ENCODE measurements at regions of chrX and their contacts with region 1.

Region 1: GRCh38 chrX:154804957-154805695 is at the start of gene MPP1:
- DNase-seq: peak; percentile 69 to 82
- ATAC-seq: peak; percentile 98 to 99 (median 99)
- H3K4me3 ChIP-seq: peak within 1 kb of the TSS; percentile 44 to 86 (median 74)
- H3K27ac ChIP-seq: peak within 1 kb of the TSS; percentile 35 to 88 (median 76)
- H3K4me1 ChIP-seq: peaks cover 0 to 23% (median 9%) of the 10 kb centered on the region in 9 donors
- H3K27me3 ChIP-seq: no peaks in the 10 kb centered on the region
- CTCF ChIP-seq: no peak
- total RNA-seq, gene MPP1: 31.8 to 50.6 (median 40.3) TPM

Region 2: DNA sequence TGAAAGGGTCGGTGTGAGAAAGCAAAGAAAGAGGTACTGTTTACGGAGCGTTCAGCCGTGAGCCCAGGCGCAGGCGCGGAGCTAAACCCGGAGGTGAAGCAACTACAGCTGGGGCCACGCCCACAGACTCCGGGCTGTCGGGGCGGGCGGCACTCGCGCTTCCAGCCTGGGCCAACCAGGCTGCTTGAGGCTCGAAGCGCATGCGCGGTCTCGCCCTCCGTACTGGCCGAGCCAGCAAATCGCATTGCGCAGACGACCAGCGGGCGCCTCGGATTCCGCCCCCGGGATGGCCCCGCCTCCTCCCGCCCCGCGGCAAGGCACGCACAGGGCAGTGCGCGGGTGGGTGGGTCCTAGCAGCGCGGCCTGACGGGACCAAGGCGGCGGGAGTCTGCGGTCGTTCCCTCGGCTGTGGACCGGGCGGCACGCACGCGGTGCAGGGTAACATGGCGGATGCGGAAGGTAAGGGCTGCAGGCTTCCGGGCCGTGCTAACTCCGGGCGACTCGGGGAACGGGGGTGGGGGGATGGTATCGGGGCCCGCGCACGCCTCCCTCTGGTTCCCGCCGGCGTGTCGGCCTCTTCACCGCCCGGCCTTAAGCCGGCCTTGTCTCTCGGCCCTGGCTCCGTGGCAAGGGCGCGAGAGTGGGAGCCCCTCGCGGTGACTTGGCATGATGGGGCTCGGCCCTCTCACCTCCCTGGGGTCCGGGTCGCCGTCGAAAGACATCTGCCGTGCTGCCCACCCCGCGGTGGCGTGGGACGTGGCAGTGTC is 42.4 kb before region 1 on chrX and contains the start of gene DKC1:
- intact Hi-C with region 1: loop called in 1 of 10 experiments (anchors 2 kb)
- DNase-seq: peak; percentile 93 to 97
- ATAC-seq: peak; percentile 96 to 99 (median 98)
- H3K4me3 ChIP-seq: peak within 1 kb of the TSS; percentile 52 to 82 (median 75)
- H3K27ac ChIP-seq: peak within 1 kb of the TSS in 9 of 10 donors; percentile 9 to 85 (median 74)
- H3K4me1 ChIP-seq: peaks cover 0 to 21% (median 11%) of the 10 kb centered on the region in 9 donors
- H3K27me3 ChIP-seq: peaks cover 0 to 9% (median 0%) of the 10 kb centered on the region in 7 donors
- CTCF ChIP-seq: peak in 5 of 9 donors; percentile 10 to 48 (median 25)
- total RNA-seq, gene DKC1: 18.8 to 31.9 (median 26.6) TPM

Region 3: DNA sequence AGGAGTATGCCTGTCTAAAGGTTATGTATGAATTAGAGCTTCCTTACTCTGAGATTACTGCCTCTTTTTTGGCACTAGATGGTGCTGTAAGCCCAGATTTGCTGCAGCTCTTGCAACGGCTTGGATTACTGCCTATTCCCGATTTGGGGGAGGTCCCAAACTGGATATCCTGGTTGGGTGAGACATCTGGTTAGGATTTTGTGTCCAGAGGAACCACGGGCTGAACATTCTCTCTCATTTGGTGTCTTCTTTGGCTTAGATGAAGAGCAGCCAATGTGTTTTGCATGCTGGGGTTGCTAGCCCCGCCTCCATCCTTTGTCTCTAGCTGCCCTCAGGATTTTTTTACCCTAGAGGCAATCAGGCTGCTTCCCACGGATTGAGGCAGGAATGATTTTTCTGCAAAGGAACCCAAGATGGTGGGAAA is 112.9 kb after region 1 on chrX:
- intact Hi-C with region 1: no loop called
- DNase-seq: peak in 1 of 2 donors; percentile 60
- ATAC-seq: peak; percentile 46 to 70 (median 56)
- H3K4me3 ChIP-seq: peak overlapping the region in 4 of 10 donors; percentile 16 to 27 (median 24)
- H3K27ac ChIP-seq: no peak overlapping the region
- H3K4me1 ChIP-seq: no peaks in the 10 kb centered on the region
- H3K27me3 ChIP-seq: no peaks in the 10 kb centered on the region
- CTCF ChIP-seq: peak in 7 of 9 donors; percentile 38 to 66 (median 56)

Region 4: GRCh38 chrX:154967603-154968002 is 162.5 kb after region 1 on chrX:
- intact Hi-C with region 1: no loop called
- DNase-seq: no peak
- ATAC-seq: no peak
- H3K4me3 ChIP-seq: no peak overlapping the region
- H3K27ac ChIP-seq: no peak overlapping the region
- H3K4me1 ChIP-seq: no peaks in the 10 kb centered on the region
- H3K27me3 ChIP-seq: no peaks in the 10 kb centered on the region
- CTCF ChIP-seq: no peak

Measured in heart right ventricle (tissue), 16 donors.